GM10248 (cell line): ENCODE measurements at regions of chr4 and their contacts with region 1.

Region 1: GRCh38 chr4:185597532-185598188 is 62.4 kb upstream of the PDLIM3 start:
- DNase-seq: peak; percentile 74
- CTCF ChIP-seq: peak; percentile 98

Region 2: GRCh38 chr4:185425647-185426352 is 171.9 kb before region 1 on chr4 and contains the start of gene UFSP2:
- CTCF ChIA-PET with region 1: interaction called, 32 read pairs
- POLR2A ChIA-PET with region 1: no interaction called
- DNase-seq: peak; percentile 92
- CTCF ChIP-seq: no peak

Region 3: DNA sequence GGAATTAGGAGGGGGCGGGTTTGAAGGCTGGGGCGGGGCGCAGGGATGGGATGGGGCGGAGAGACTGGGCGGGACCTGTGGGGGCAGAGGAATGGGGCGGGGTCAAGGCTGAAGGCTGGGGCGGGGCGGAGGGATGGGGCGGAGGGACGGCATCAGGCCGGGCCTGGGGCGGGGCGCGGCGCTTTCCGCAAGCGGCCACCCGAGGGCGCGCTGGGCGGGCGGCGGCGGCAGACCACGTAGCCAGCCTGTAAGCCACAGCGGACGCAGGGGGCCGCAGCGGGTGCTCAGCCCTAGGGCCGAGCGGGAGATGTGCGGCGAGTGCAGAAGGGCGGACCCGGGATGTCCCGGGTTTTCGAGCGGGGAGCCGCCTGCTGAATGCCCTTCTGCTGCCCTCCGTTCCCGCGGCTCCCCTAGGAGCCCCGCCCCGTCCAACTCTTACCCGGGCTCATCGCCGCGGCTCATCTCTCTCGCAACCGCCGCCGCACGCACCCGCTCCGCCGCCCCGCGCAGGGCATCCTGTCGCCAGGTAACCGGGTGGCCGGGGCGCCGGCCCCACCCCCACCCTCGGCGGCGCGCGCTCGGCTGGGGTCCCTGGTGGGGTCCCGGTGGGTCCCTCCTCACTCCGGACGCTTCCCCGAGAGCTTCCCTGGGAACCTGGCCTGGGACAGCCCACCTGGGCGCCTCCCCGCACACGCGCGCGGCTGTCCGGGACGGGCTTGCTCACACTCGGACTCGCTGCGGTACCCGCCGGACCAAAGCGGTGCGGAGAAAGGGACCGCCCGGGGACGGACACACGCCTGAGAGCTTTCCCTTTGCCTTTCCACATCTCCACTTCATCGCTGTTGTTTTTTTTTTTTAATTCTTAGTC is 126.2 kb before region 1 on chr4 and contains the start of gene CCDC110:
- CTCF ChIA-PET with region 1: interaction called, 40 read pairs
- POLR2A ChIA-PET with region 1: no interaction called
- DNase-seq: peak; percentile 100
- CTCF ChIP-seq: peak; percentile 81

Region 4: GRCh38 chr4:185479507-185479971 is 118.1 kb before region 1 on chr4:
- CTCF ChIA-PET with region 1: interaction called, 40 read pairs
- POLR2A ChIA-PET with region 1: no interaction called
- DNase-seq: peak; percentile 59
- CTCF ChIP-seq: no peak

Region 5: DNA sequence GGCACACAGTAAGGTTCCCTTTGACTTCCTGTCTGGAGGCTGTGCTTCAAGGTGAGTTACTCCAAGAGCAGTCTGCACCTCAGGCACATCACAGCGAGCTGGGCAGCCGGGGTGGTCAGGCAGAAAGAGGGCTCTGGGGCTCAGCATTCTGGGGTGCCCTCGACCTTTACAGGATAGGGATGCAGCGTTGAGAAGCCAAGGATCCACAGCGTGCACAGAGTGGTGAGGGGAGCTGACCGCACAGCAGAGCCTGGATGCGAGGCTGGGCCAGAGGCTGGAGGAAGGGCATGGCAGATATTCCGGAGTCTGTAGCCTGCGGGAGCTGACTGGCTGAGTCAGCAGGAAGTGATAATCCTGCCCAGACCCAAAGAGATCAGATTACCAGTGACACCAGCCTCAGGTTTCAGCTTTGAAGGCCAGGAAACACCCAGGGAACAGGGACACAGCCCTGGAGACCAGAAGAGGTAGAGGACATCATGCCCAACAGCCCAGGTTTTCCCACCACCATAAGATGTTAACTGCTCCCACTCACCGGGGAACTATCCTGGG is 23.9 kb before region 1 on chr4:
- CTCF ChIA-PET with region 1: interaction called, 17 read pairs
- POLR2A ChIA-PET with region 1: no interaction called
- DNase-seq: no peak
- CTCF ChIP-seq: no peak

Region 6: DNA sequence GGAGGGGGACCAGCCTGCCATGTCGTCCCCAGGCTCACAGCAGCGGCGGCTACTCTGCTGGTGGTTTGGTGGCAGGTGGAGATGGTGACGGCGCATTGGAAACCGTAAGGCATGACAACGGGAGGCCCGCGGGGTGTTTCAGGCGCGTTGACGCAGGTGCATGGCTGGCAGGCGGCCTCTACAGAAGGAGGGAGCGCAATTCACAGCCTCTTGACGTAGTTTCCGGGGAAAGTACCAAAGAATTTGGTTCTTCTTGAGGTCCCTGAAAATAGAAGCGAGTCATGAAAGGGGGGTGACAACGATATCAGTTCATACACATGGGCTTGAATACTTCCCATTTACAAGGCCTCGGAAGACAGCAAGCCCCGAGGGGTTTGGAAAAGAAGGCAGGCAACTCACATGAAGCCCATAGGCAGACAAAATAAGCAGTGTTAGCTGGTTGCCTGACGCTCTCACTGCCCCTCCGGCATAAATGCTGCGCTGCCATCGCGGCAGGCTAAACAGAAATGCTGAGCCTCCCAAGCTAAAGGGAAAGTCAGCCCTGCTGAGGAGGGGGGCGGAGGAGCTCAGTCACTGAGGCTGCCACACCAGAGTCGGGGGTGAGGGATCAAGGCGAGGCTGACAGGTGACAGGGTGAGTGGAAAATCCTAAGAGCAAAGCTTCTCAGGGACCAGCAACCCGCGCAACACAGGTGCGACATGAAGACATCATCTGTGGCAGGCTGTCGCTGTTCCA is 10.1 kb before region 1 on chr4:
- CTCF ChIA-PET with region 1: interaction called, 74 read pairs
- POLR2A ChIA-PET with region 1: no interaction called
- DNase-seq: peak; percentile 86
- CTCF ChIP-seq: no peak

Region 7: DNA sequence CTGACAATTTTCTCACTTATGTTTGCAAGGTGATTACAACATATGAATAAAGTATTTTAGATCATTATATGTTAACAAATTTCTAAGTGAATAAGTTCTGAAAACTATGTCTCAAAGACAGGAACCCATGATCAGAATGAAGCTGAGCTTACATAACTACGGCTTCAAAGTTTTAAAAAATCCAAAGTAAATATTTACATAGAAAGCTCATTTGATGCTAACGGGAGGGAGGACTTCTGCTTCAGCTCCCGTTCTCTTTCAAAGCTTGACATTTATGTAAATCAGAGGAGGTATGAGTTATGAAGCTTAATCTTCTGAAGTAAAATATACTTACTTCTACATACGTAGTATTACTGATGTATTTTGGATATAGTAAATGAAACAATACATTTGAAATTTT is 10.5 kb after region 1 on chr4:
- CTCF ChIA-PET with region 1: interaction called, 61 read pairs
- POLR2A ChIA-PET with region 1: no interaction called
- DNase-seq: no peak
- CTCF ChIP-seq: no peak